ENCODE measurements at regions of chr1 and their contacts with region 1.

Region 1: DNA sequence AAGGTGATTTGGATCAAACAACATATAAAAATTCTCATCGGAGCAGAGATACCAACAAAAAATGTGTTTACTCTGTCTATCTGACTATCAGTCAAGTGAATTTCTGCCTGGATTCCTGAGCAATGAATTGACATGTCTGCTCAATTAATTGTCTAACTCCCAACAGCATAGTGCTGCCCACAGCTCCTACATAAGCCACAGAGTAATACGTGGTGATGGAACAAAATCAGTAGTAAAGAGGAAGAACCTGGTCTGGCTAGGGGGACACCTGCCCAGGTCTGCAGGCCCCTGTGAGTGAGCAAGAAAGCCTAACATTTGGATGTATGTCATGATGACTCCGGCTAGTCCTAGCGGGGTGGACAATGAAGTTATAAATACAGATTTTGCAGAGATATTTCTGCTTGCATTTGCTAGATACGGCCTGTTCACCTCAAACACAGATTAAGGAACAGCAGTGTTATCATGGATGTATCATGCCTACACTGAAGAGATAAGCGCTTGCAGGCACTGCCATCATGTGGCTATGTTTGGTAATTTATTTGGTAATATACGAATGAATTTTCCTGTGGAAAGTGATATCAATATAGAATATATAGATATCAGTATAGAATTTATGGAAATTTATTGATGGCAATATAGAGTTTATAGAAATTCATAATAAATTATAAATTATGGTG is 69.6 kb upstream of the LRRC8B start:
- DNase-seq: peak; percentile 23
- ATAC-seq: peak; percentile 87
- H3K4me3 ChIP-seq: no peak overlapping the region
- H3K27ac ChIP-seq: no peak overlapping the region
- H3K4me1 ChIP-seq: no peaks in the 10 kb centered on the region
- H3K27me3 ChIP-seq: no peaks in the 10 kb centered on the region
- CTCF ChIP-seq: peak; percentile 68
- EP300 ChIP-seq: no peak
- POLR2A ChIP-seq: no peak
- RAD21 ChIP-seq: no peak

Region 2: DNA sequence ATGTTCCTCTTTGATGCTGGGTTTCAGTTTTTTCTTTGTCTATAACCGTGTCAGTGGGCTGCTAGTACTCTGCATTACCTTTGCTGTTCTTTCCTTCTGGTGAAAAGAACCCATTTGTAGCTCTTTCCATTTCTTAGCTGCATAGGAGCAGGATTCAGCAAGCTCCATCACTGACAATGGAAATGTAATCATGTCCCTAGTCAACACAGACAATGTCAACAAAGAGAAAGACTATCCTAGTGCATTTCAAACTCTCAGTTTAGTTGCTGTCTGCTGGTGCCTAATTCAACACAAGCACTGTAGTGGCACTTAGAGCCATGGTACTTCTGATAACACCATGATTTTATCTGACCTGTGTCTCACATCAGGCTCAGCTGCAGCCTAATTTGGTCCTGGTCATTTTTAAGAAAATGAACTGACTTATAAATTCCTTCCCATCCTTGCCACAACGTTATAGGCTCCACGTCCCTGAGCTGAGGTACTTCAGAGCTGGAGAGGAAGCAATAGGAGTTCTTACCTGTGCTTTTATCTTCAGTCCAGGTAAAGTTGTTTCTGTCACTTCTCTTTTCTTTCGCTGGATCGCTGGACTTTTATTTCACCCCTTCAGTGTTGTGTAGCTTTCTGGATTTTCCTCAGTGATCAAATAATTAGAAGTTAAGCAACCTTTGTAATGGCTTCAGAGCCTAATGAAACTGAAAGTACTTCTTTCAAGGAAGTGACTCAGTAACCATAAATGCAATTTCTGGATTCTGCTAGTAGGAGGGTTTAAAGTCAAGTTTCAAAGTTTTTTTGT is 432.6 kb before region 1 on chr1 and contains the start of gene GBP3:
- CTCF ChIA-PET with region 1: no interaction called
- POLR2A ChIA-PET with region 1: no interaction called
- in situ Hi-C with region 1: loop called (anchors 25 kb)
- intact Hi-C with region 1: no loop called
- DNase-seq: no peak
- ATAC-seq: peak; percentile 86
- H3K4me3 ChIP-seq: peak within 1 kb of the TSS in 1 of 3 experiments; percentile 36; a peak in 3 of 6 replicates
- H3K27ac ChIP-seq: no peak within 1 kb of the TSS
- H3K4me1 ChIP-seq: peaks cover 21% of the 10 kb centered on the region
- H3K27me3 ChIP-seq: no peaks in the 10 kb centered on the region; a peak in 1 of 5 replicates
- CTCF ChIP-seq: no peak
- EP300 ChIP-seq: no peak
- POLR2A ChIP-seq: no peak
- RAD21 ChIP-seq: no peak
- total RNA-seq, gene GBP3: 0.32 and 0.46 TPM in 2 replicates

Region 3: GRCh38 chr1:89381618-89382017 is 73.4 kb before region 1 on chr1:
- CTCF ChIA-PET with region 1: no interaction called
- POLR2A ChIA-PET with region 1: no interaction called
- in situ Hi-C with region 1: no loop called
- intact Hi-C with region 1: loop called (anchors 5 kb)
- DNase-seq: peak; percentile 10
- ATAC-seq: peak; percentile 96
- H3K4me3 ChIP-seq: no peak overlapping the region
- H3K27ac ChIP-seq: no peak overlapping the region
- H3K4me1 ChIP-seq: no peaks in the 10 kb centered on the region
- H3K27me3 ChIP-seq: no peaks in the 10 kb centered on the region
- CTCF ChIP-seq: peak; percentile 36
- EP300 ChIP-seq: no peak
- POLR2A ChIP-seq: no peak
- RAD21 ChIP-seq: no peak